Naive thymus-derived CD4-positive, alpha-beta T cell (primary cell): ENCODE measurements at regions of chr2 and their contacts with region 1.

Region 1: DNA sequence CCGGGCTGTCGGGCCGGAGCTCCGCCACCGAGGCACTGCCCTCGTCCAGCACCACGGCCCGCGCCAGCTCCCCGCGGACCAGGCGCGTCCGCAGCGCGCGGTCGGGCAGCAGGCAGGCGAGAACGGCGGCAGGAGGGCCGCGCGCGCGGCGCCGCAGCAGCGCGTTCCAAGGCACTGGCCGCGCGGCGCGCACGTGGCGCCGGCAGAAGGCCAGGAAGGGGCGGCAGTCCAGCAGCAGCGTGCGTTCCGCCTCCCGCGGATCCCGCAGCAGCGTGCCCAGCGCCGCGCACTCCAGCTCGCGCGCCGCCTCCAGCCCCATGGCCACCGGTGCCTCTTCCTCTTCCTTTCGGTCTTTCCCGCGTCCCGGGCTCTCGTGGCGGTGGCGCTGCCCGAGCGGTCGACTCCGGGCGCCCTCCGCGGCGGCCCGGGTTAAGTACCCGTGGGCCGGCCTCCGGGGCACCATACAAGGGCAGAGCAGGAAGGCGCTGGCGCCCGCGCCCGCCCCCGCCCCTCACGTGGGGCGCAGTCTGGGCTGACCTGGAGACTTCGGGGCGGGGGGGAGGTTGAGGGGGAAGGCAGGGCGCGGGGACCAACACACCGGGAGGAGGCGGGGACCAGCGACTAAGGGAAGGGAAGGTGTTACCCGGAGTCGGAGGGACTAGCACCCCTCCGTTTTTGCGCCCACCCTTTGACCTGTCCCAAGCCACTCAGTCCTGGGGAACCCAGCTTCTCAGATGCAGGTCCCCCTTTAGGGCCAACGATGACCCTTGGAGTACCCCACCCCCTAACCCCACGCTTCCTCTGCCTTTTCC is at the start of gene DUSP2:
- DNase-seq: peak; percentile 79 to 97 (median 83)
- ATAC-seq: peak; percentile 61
- H3K4me3 ChIP-seq: peak within 1 kb of the TSS; percentile 69
- H3K4me3 Mint-ChIP-seq: peak within 1 kb of the TSS; percentile 90 to 98 (median 95)
- H3K27ac ChIP-seq: peak within 1 kb of the TSS; percentile 99
- H3K27ac Mint-ChIP-seq: peak within 1 kb of the TSS; percentile 96 to 100 (median 99)
- H3K4me1 ChIP-seq: peaks cover 50 to 52% of the 10 kb centered on the region in 2 donors
- H3K4me1 Mint-ChIP-seq: peaks cover 35 to 69% (median 62%) of the 10 kb centered on the region in 7 donors
- H3K27me3 ChIP-seq: no peaks in the 10 kb centered on the region
- H3K27me3 Mint-ChIP-seq: no peaks in the 10 kb centered on the region
- total RNA-seq, gene DUSP2: 22.1 to 255 (median 50.3) TPM

Region 2: DNA sequence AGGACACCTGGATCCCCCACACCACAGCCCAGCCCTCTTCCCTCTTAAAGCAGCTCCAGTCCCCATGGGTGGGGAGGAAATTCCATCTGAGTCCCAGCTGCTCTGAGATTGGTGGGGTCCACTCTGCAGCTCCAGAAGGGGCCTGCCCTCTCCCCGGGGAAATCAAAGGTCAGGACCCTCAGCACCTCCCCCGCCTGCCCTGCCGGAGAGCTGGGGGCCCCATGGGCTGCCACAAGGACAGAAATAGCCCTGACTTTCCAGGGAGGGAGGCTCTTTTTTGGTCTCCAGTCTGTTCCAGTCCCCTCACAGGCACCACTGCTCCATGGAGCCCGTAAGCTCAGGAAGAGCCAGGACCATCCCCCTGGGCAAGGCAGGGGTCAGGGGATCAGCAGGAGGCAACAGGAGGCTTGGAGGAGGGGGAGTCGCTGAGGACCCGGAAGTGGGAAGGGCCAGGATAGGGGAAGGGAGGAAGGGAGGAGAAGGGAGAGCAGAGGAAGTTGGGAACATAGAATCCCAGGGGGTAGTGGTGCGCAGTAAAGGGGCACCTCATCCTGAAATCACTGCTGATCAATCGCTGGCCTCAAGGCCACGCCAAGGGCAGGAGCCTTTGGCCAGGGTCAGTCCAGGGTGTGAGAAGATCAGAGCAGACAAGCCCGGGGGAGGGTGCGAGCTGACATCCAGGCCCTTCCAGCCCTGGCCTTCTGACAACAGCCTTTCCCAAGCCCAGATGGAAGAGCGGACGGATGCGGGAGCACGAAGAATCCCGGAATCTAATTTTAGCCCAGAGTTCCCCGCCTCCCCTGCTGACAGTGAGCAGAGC is 36.5 kb before region 1 on chr2:
- CTCF ChIA-PET with region 1: no interaction called
- POLR2A ChIA-PET with region 1: no interaction called
- intact Hi-C with region 1: no loop called
- DNase-seq: no peak
- ATAC-seq: no peak
- H3K4me3 ChIP-seq: no peak overlapping the region
- H3K4me3 Mint-ChIP-seq: no peak overlapping the region
- H3K27ac ChIP-seq: no peak overlapping the region
- H3K27ac Mint-ChIP-seq: no peak overlapping the region
- H3K4me1 ChIP-seq: no peaks in the 10 kb centered on the region
- H3K4me1 Mint-ChIP-seq: peaks cover 0 to 4% (median 0%) of the 10 kb centered on the region in 7 donors
- H3K27me3 ChIP-seq: no peaks in the 10 kb centered on the region
- H3K27me3 Mint-ChIP-seq: peaks cover 0 to 5% (median 0%) of the 10 kb centered on the region in 5 donors

Region 3: DNA sequence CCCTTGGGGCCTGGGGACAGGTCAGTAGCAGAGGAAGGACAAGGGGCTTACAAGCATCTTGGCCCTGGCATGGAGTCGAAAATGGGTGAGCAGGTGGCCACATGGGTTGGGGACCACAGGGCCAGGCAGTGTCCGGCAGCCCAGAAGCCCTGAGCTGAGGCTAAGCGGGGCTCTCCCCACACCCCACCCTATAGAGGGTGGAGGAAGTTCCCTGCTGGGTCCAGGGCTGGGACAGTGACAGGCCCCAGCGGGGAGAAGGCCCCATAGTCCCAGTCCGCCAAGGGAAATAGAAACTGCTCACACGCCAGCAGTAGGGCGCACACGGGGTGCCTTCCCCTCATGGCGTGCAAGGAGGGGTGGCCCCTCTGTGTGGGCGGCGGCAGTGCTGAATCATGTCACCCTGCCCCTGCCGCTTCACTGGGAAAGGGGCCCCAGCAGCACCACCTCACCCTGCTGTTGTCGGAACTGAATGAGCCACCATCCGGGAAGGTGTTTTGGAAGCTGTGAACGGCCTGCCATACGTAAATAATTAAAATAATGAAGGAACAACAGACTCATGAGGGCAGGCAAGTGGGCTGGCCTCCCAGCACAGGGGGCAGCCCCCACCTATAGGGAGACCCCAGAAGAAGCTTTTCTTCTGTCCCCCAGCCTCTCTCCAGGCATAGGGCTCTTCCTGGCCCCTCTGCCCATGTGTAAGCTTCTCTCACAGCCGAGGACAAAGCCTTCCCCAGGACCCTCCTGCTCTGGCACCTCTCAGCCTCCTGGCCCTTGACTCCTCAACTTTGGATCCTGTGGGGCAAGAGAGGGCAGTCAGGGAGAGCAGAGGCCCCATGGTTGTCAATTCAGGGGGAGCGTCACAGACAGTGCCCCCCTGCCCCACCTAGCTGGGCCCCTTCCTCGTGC is 12.7 kb after region 1 on chr2:
- CTCF ChIA-PET with region 1: interaction called, 25 read pairs
- POLR2A ChIA-PET with region 1: interaction called, 106 read pairs
- intact Hi-C with region 1: loop called (anchors 1 kb)
- DNase-seq: peak in 8 of 9 donors; percentile 37 to 93 (median 50)
- ATAC-seq: peak; percentile 82
- H3K4me3 ChIP-seq: peak overlapping the region; percentile 41
- H3K4me3 Mint-ChIP-seq: peak overlapping the region; percentile 64 to 92 (median 69)
- H3K27ac ChIP-seq: peak overlapping the region; percentile 56
- H3K27ac Mint-ChIP-seq: peak overlapping the region; percentile 76 to 97 (median 84)
- H3K4me1 ChIP-seq: peaks cover 42 to 71% of the 10 kb centered on the region in 2 donors
- H3K4me1 Mint-ChIP-seq: peaks cover 49 to 79% (median 69%) of the 10 kb centered on the region in 7 donors
- H3K27me3 ChIP-seq: no peaks in the 10 kb centered on the region
- H3K27me3 Mint-ChIP-seq: no peaks in the 10 kb centered on the region

Region 4: GRCh38 chr2:96174251-96175144 is 29.3 kb after region 1 on chr2:
- CTCF ChIA-PET with region 1: interaction called, 401 read pairs
- POLR2A ChIA-PET with region 1: interaction called, 60 read pairs
- intact Hi-C with region 1: loop called (anchors 1 kb)
- DNase-seq: peak; percentile 65 to 86 (median 78)
- ATAC-seq: peak; percentile 97
- H3K4me3 ChIP-seq: no peak overlapping the region
- H3K4me3 Mint-ChIP-seq: peak overlapping the region in 1 of 10 donors; percentile 23
- H3K27ac ChIP-seq: no peak overlapping the region
- H3K27ac Mint-ChIP-seq: peak overlapping the region in 8 of 9 donors; percentile 28 to 96 (median 62)
- H3K4me1 ChIP-seq: peaks cover 4 to 8% of the 10 kb centered on the region in 2 donors
- H3K4me1 Mint-ChIP-seq: peaks cover 6 to 21% (median 13%) of the 10 kb centered on the region in 7 donors
- H3K27me3 ChIP-seq: no peaks in the 10 kb centered on the region
- H3K27me3 Mint-ChIP-seq: no peaks in the 10 kb centered on the region

Region 5: DNA sequence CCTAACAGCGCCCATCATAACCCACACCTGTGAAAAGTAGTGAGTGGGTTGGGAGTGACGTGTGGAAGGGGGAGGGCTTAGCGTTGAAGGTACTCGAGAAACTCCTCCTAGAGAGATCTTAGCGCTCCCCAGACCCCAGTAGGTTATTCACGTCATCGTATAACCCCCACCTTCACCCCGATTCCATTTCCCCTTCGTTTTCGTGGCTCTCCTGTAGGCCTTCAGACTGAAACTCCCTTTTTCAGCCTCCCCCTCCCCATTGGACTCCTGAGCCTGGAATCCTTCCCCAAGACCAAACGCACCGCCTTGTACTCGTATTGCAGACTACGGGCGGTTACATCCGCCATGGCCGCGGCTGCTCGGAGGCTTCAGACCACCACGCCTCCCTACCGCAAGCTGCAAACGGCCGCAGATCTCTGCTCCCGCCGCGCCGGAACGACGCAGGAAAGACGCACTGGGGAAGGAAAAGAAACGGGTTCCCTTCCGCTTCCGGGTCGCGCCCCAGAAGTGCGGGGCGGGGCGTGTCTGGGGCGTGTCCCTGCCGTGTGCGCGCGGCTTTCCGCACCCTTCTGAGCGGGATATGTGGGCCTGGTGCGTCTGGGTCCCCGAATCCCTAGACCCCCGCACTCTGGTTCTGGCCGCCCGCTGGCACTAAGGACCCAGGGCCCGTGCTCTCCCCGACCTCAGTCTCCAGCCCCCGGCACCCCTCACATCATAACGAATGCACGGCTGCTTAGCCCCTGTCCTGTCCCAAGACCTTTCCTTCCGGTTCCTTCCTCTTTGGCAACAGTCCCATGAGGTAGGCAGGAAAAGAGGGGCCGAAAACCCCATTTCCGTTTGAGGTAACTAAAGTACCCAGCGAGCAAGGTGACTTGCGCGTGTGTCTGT is 160.1 kb after region 1 on chr2 and contains the start of gene SNRNP200:
- CTCF ChIA-PET with region 1: no interaction called
- POLR2A ChIA-PET with region 1: no interaction called
- intact Hi-C with region 1: loop called in 1 of 2 experiments (anchors 2 kb)
- DNase-seq: peak; percentile 77 to 92 (median 90)
- ATAC-seq: peak; percentile 96
- H3K4me3 ChIP-seq: peak within 1 kb of the TSS; percentile 85
- H3K4me3 Mint-ChIP-seq: peak within 1 kb of the TSS; percentile 94 to 100 (median 99)
- H3K27ac ChIP-seq: peak within 1 kb of the TSS; percentile 94
- H3K27ac Mint-ChIP-seq: peak within 1 kb of the TSS; percentile 97 to 100 (median 99)
- H3K4me1 ChIP-seq: peaks cover 30 to 41% of the 10 kb centered on the region in 2 donors
- H3K4me1 Mint-ChIP-seq: peaks cover 41 to 61% (median 58%) of the 10 kb centered on the region in 7 donors
- H3K27me3 ChIP-seq: no peaks in the 10 kb centered on the region
- H3K27me3 Mint-ChIP-seq: no peaks in the 10 kb centered on the region
- total RNA-seq, gene SNRNP200: 165 to 255 (median 212) TPM

Region 6: GRCh38 chr2:96485751-96486651 is 340.8 kb after region 1 on chr2:
- CTCF ChIA-PET with region 1: no interaction called
- POLR2A ChIA-PET with region 1: no interaction called
- intact Hi-C with region 1: loop called in 1 of 2 experiments (anchors 1 kb)
- DNase-seq: peak; percentile 46 to 83 (median 72)
- ATAC-seq: peak; percentile 93
- H3K4me3 ChIP-seq: peak overlapping the region; percentile 71
- H3K4me3 Mint-ChIP-seq: peak overlapping the region; percentile 87 to 97 (median 94)
- H3K27ac ChIP-seq: peak overlapping the region; percentile 84
- H3K27ac Mint-ChIP-seq: peak overlapping the region; percentile 94 to 100 (median 98)
- H3K4me1 ChIP-seq: peaks cover 6 to 14% of the 10 kb centered on the region in 2 donors
- H3K4me1 Mint-ChIP-seq: peaks cover 11 to 62% (median 29%) of the 10 kb centered on the region in 7 donors
- H3K27me3 ChIP-seq: no peaks in the 10 kb centered on the region
- H3K27me3 Mint-ChIP-seq: peaks cover 0 to 4% (median 2%) of the 10 kb centered on the region in 5 donors